ENCODE measurements at regions of chr10 and their contacts with region 1.

Region 1: DNA sequence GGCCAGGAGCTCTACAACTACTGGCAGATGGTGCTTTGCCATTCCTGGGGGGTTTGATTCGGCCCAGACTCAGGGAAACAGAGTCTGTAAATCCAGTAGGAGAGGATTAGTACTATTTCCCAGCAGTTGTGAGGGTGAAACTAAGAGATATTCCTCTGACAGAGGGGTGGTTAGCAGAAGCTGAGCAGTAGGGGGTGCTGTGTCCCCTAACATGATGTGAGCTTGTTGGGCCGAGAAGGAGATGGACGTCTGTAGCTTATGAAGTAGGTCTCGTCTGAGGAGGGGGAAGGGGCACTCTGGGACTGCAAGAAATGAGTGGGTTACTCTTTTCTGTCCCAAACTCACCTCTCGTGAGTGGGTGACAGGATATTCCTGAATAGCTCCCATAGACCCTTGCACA is 179.2 kb upstream of the MBL2 start:
- DNase-seq: peak; percentile 83 to 84
- H3K4me3 ChIP-seq: no peak overlapping the region
- H3K4me3 Mint-ChIP-seq: no peak overlapping the region
- H3K27ac Mint-ChIP-seq: peak overlapping the region; percentile 53
- H3K4me1 ChIP-seq: peaks cover 25% of the 10 kb centered on the region
- H3K4me1 Mint-ChIP-seq: peaks cover 25% of the 10 kb centered on the region
- H3K27me3 ChIP-seq: no peaks in the 10 kb centered on the region
- H3K27me3 Mint-ChIP-seq: no peaks in the 10 kb centered on the region
- CTCF ChIP-seq: peak; percentile 71 to 78

Region 2: GRCh38 chr10:52965938-52966401 is 14.1 kb after region 1 on chr10:
- CTCF ChIA-PET with region 1: interaction called, 7 read pairs
- POLR2A ChIA-PET with region 1: no interaction called
- intact Hi-C with region 1: loop called (anchors 1 kb)
- DNase-seq: peak; percentile 60 to 69
- H3K4me3 ChIP-seq: no peak overlapping the region
- H3K4me3 Mint-ChIP-seq: peak overlapping the region; percentile 44
- H3K27ac Mint-ChIP-seq: peak overlapping the region; percentile 88
- H3K4me1 ChIP-seq: peaks cover 70% of the 10 kb centered on the region
- H3K4me1 Mint-ChIP-seq: peaks cover 57% of the 10 kb centered on the region
- H3K27me3 ChIP-seq: no peaks in the 10 kb centered on the region
- H3K27me3 Mint-ChIP-seq: no peaks in the 10 kb centered on the region
- CTCF ChIP-seq: no peak

Region 3: DNA sequence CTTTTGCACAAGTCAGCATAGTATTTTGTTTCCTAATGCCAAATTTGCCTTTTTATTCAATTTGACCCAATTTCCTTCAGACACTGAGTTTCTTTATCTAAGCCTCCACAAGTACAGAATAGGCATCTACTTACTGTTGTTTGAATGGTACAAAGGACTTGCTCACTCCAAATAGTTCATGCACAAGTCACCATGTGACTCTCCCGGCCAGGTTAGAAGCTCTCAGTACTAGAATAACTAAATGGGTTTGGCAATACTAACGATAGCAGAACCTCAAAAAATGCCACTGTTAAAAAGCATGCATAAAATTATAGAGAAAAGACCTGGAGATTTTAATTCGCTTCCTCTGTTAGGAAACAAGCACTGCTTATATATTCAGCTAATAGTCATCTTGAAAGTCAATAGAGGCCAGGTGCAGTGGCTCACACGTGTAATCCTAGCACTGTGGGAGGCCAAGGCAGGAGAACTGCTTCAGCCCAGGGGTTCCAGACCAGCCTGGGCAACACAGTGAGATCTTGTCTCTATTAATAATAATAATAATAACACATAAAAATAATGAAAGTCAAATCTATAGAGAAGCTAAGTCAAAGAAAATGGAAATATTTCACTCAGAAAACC is 156.6 kb after region 1 on chr10:
- CTCF ChIA-PET with region 1: no interaction called
- POLR2A ChIA-PET with region 1: no interaction called
- intact Hi-C with region 1: loop called (anchors 5 kb)
- DNase-seq: no peak
- H3K4me3 ChIP-seq: no peak overlapping the region
- H3K4me3 Mint-ChIP-seq: no peak overlapping the region
- H3K27ac Mint-ChIP-seq: no peak overlapping the region
- H3K4me1 ChIP-seq: peaks cover 11% of the 10 kb centered on the region
- H3K4me1 Mint-ChIP-seq: peaks cover 15% of the 10 kb centered on the region
- H3K27me3 ChIP-seq: no peaks in the 10 kb centered on the region
- H3K27me3 Mint-ChIP-seq: no peaks in the 10 kb centered on the region
- CTCF ChIP-seq: no peak

Region 4: GRCh38 chr10:53162856-53163255 is 211.0 kb after region 1 on chr10:
- CTCF ChIA-PET with region 1: no interaction called
- POLR2A ChIA-PET with region 1: no interaction called
- intact Hi-C with region 1: loop called (anchors 5 kb)
- DNase-seq: no peak
- H3K4me3 ChIP-seq: no peak overlapping the region
- H3K4me3 Mint-ChIP-seq: no peak overlapping the region
- H3K27ac Mint-ChIP-seq: no peak overlapping the region
- H3K4me1 ChIP-seq: no peaks in the 10 kb centered on the region
- H3K4me1 Mint-ChIP-seq: no peaks in the 10 kb centered on the region
- H3K27me3 ChIP-seq: no peaks in the 10 kb centered on the region
- H3K27me3 Mint-ChIP-seq: no peaks in the 10 kb centered on the region
- CTCF ChIP-seq: no peak

Region 5: GRCh38 chr10:53298443-53298842 is 346.6 kb after region 1 on chr10:
- CTCF ChIA-PET with region 1: no interaction called
- POLR2A ChIA-PET with region 1: no interaction called
- intact Hi-C with region 1: loop called (anchors 5 kb)
- DNase-seq: no peak
- H3K4me3 ChIP-seq: no peak overlapping the region
- H3K4me3 Mint-ChIP-seq: no peak overlapping the region
- H3K27ac Mint-ChIP-seq: no peak overlapping the region
- H3K4me1 ChIP-seq: no peaks in the 10 kb centered on the region
- H3K4me1 Mint-ChIP-seq: no peaks in the 10 kb centered on the region
- H3K27me3 ChIP-seq: no peaks in the 10 kb centered on the region
- H3K27me3 Mint-ChIP-seq: no peaks in the 10 kb centered on the region
- CTCF ChIP-seq: no peak

Region 6: DNA sequence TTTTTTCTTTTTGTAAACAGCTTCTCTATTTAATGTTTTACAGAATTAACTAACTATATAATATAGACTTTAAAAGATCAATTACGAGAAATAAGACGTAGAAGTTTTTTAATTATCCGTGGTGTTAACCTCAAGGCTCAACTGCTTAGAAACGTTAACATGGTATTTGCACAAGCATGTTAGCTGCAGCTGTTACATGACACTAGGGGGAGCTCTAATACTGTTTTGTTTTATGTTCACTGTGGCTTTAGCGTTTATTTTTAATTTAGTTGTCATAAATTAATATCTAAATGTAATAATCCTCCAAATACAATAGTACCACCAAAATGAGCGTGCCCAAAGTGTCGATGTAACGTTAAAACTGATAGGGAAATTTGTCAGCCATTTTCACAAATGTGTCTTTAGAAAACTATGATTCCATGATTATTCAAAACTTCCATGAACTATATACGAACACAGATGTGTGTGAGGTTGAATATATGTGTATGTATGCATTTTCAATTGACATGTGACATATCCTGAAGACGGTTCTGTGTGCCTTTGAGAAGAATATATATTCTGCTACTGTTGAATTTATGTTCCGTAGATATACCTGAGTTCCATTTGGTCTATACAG is 649.5 kb after region 1 on chr10:
- CTCF ChIA-PET with region 1: no interaction called
- POLR2A ChIA-PET with region 1: no interaction called
- intact Hi-C with region 1: loop called (anchors 2 kb)
- DNase-seq: peak in 1 of 2 experiments; percentile 43
- H3K4me3 ChIP-seq: no peak overlapping the region
- H3K4me3 Mint-ChIP-seq: no peak overlapping the region
- H3K27ac Mint-ChIP-seq: no peak overlapping the region
- H3K4me1 ChIP-seq: peaks cover 32% of the 10 kb centered on the region
- H3K4me1 Mint-ChIP-seq: peaks cover 29% of the 10 kb centered on the region
- H3K27me3 ChIP-seq: no peaks in the 10 kb centered on the region
- H3K27me3 Mint-ChIP-seq: no peaks in the 10 kb centered on the region
- CTCF ChIP-seq: peak; percentile 98 to 99